ENCODE measurements at regions of chr3 and their contacts with region 1.

Region 1: GRCh38 chr3:51657234-51657633 is 13.8 kb upstream of the TEX264 start:
- DNase-seq: no peak
- ATAC-seq: no peak
- H3K4me3 ChIP-seq: no peak overlapping the region
- H3K27ac ChIP-seq: no peak overlapping the region
- H3K4me1 ChIP-seq: no peaks in the 10 kb centered on the region
- H3K27me3 ChIP-seq: no peaks in the 10 kb centered on the region
- CTCF ChIP-seq: no peak
- POLR2A ChIP-seq: no peak

Region 2: DNA sequence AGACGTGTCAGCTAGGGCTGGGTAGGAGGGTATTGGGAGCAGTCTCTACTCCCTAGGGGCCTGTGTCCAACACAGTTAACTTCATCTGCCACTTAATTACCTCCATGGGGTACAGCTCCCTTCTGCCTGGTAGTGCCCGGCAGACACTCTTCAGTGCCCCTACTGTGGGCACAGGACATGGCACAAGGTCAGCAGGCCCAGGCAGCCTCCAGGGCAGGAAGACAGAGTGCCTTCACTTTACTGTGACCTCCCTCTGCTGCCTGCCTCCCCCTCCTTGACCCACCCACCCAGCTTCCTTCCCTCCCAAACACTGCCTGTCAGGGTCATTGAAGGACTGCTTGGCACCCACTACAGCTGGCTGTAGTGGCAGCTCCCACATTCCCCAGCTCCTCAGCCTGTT is 43.2 kb after region 1 on chr3:
- in situ Hi-C with region 1: no loop called
- intact Hi-C with region 1: loop called (anchors 1 kb)
- DNase-seq: no peak
- ATAC-seq: no peak
- H3K4me3 ChIP-seq: no peak overlapping the region
- H3K27ac ChIP-seq: no peak overlapping the region
- H3K4me1 ChIP-seq: no peaks in the 10 kb centered on the region
- H3K27me3 ChIP-seq: no peaks in the 10 kb centered on the region
- CTCF ChIP-seq: no peak
- POLR2A ChIP-seq: no peak